ENCODE measurements at regions of chr5 and their contacts with region 1.

Region 1: GRCh38 chr5:80093796-80094195 is 58.6 kb downstream of the THBS4 start:
- DNase-seq: no peak

Region 2: GRCh38 chr5:80275347-80275746 is 181.6 kb after region 1 on chr5:
- intact Hi-C with region 1: loop called (anchors 5 kb)
- DNase-seq: peak in 27 of 42 donors; percentile 13 to 78 (median 45)

Region 3: GRCh38 chr5:80672140-80672736 is 578.4 kb after region 1 on chr5:
- intact Hi-C with region 1: loop called (anchors 5 kb)
- DNase-seq: peak in 41 of 42 donors; percentile 30 to 91 (median 78)